ENCODE measurements at regions of chr1 and their contacts with region 1.

Region 1: DNA sequence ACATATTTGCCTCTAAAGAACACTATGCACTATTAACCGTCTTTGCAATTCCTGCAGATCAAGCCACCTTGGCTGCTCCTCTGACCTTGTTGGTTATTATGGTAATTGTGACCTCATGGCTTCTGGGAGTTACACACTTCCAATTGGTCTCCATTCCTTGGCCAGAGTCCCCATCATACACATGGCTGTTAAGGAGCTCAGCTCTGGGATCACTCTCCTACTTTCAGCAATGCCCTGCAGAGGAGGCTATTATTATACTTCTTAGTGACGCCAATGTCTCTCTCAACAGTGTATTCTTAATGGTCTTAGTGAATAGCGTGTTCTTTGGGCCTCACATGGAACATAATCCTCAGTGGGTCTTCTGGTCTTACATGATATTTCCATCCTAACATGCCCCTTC is 10.0 kb upstream of the JAK1 start:
- DNase-seq: no peak
- ATAC-seq: no peak
- H3K4me3 ChIP-seq: no peak overlapping the region
- H3K4me3 Mint-ChIP-seq: no peak overlapping the region
- H3K27ac ChIP-seq: no peak overlapping the region
- H3K27ac Mint-ChIP-seq: no peak overlapping the region
- H3K4me1 ChIP-seq: no peaks in the 10 kb centered on the region
- H3K4me1 Mint-ChIP-seq: peaks cover 4% of the 10 kb centered on the region
- H3K27me3 ChIP-seq: no peaks in the 10 kb centered on the region
- H3K27me3 Mint-ChIP-seq: no peaks in the 10 kb centered on the region
- CTCF ChIP-seq: no peak

Region 2: DNA sequence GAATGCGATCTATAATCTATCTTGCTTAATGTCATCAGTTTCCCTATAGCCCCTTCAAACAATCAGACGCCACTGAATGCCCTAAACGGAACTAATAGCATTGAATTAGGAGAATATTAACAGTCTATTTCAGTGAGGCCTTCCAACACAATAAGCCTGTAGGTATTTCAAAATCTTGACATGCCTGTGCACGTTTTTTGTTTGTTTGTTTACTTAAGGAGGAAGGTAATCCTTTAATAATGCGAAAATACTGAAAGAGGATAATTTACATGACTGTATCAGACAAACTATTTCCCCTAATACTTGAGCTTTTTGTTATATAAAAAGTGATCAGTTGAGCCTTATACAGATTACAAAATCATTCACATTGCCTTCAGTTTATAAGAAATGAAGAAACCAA is 19.0 kb after region 1 on chr1:
- CTCF ChIA-PET with region 1: no interaction called
- POLR2A ChIA-PET with region 1: interaction called, 11 read pairs
- intact Hi-C with region 1: no loop called
- DNase-seq: no peak
- ATAC-seq: no peak
- H3K4me3 ChIP-seq: no peak overlapping the region
- H3K4me3 Mint-ChIP-seq: no peak overlapping the region
- H3K27ac ChIP-seq: no peak overlapping the region
- H3K27ac Mint-ChIP-seq: no peak overlapping the region
- H3K4me1 ChIP-seq: no peaks in the 10 kb centered on the region
- H3K4me1 Mint-ChIP-seq: no peaks in the 10 kb centered on the region
- H3K27me3 ChIP-seq: peaks cover 0 to 4% (median 0%) of the 10 kb centered on the region in 4 experiments
- H3K27me3 Mint-ChIP-seq: no peaks in the 10 kb centered on the region
- CTCF ChIP-seq: no peak

Measured in B cell (primary cell).